PC-3 (cell line): ENCODE measurements at regions of chr6 and their contacts with region 1.

Region 1: GRCh38 chr6:56542364-56543331 is 100.0 kb downstream of the DST start:
- DNase-seq: peak; percentile 98
- ATAC-seq: peak; percentile 86
- H3K4me3 ChIP-seq: peak overlapping the region; percentile 77
- H3K27ac ChIP-seq: peak overlapping the region; percentile 91
- H3K4me1 ChIP-seq: peaks cover 49% of the 10 kb centered on the region
- H3K27me3 ChIP-seq: no peaks in the 10 kb centered on the region
- CTCF ChIP-seq: peak; percentile 43

Region 2: GRCh38 chr6:56359201-56359899 is 183.3 kb before region 1 on chr6:
- CTCF ChIA-PET with region 1: no interaction called
- POLR2A ChIA-PET with region 1: interaction called, 3 read pairs
- intact Hi-C with region 1: loop called (anchors 2 kb)
- DNase-seq: peak; percentile 84
- ATAC-seq: peak; percentile 68
- H3K4me3 ChIP-seq: no peak overlapping the region
- H3K27ac ChIP-seq: no peak overlapping the region
- H3K4me1 ChIP-seq: peaks cover 32% of the 10 kb centered on the region
- H3K27me3 ChIP-seq: no peaks in the 10 kb centered on the region
- CTCF ChIP-seq: peak; percentile 89

Region 3: GRCh38 chr6:56370561-56371211 is 172.0 kb before region 1 on chr6:
- CTCF ChIA-PET with region 1: interaction called, 21 read pairs
- POLR2A ChIA-PET with region 1: no interaction called
- intact Hi-C with region 1: no loop called
- DNase-seq: peak; percentile 89
- ATAC-seq: peak; percentile 75
- H3K4me3 ChIP-seq: peak overlapping the region; percentile 56
- H3K27ac ChIP-seq: peak overlapping the region; percentile 92
- H3K4me1 ChIP-seq: peaks cover 36% of the 10 kb centered on the region
- H3K27me3 ChIP-seq: no peaks in the 10 kb centered on the region
- CTCF ChIP-seq: no peak

Region 4: GRCh38 chr6:56416247-56416646 is 126.4 kb before region 1 on chr6:
- CTCF ChIA-PET with region 1: no interaction called
- POLR2A ChIA-PET with region 1: interaction called, 11 read pairs
- intact Hi-C with region 1: no loop called
- DNase-seq: no peak
- ATAC-seq: no peak
- H3K4me3 ChIP-seq: no peak overlapping the region
- H3K27ac ChIP-seq: no peak overlapping the region
- H3K4me1 ChIP-seq: no peaks in the 10 kb centered on the region
- H3K27me3 ChIP-seq: no peaks in the 10 kb centered on the region
- CTCF ChIP-seq: no peak

Region 5: DNA sequence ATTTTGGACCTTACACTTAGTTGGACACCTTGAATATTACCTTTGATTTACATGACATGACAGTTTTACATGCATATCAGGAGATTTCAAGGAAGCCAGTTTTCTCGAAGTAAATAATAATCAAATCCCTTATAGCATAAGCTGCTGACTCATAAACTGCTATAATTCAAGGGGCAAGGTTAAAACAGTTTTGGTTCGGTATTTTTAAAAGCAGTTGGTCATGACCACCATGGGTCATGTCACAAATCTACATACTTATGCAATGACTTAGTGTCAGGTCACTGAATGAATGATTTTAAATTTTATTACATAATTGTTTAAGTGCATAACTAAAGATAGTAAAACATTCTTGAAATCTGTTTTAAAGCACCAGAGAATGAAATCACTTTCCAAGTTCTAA is 58.0 kb before region 1 on chr6:
- CTCF ChIA-PET with region 1: no interaction called
- POLR2A ChIA-PET with region 1: no interaction called
- intact Hi-C with region 1: loop called (anchors 1 kb)
- DNase-seq: peak; percentile 90
- ATAC-seq: peak; percentile 83
- H3K4me3 ChIP-seq: peak overlapping the region; percentile 33
- H3K27ac ChIP-seq: peak overlapping the region; percentile 92
- H3K4me1 ChIP-seq: peaks cover 28% of the 10 kb centered on the region
- H3K27me3 ChIP-seq: no peaks in the 10 kb centered on the region
- CTCF ChIP-seq: no peak

Region 6: DNA sequence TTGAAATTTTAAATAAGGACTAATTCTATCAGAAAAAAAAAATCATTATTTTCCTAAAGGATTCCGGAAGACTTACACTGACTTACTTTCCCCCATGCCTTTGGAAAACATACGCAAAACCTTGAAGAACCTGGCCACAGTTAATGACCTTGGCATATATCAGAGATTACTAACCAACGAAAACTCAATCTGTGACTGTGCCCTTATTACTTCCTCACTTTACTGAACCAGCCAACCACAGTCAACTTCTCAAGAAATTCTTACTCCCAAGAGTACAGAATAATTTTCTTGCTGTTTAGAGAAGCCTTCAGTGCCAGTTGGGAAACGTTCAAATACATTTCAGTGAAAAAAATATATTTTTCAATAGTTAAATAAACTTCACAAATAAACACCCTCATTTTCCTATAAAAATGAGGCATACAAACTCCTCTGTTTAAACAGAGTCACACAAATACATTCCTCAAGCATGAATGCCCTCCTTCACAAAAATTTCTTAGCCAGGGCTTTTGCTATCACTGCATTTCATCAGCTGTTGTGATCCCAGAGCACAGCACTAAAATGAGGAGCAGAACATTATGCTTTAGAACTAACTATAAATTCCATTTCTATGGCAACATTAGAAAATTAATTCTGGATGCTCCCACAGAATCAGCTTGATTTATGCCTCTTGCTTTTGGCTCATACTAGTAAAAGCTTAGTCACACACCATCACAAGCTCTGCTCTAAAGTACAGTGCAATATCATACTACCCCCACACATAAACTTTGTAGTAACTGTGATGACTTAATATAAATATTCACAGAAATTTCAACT is 17.6 kb before region 1 on chr6:
- CTCF ChIA-PET with region 1: interaction called, 6 read pairs
- POLR2A ChIA-PET with region 1: interaction called, 7 read pairs
- intact Hi-C with region 1: loop called (anchors 1 kb)
- DNase-seq: peak; percentile 84
- ATAC-seq: peak; percentile 81
- H3K4me3 ChIP-seq: peak overlapping the region; percentile 15; the same call in 1 of the 2 replicates
- H3K27ac ChIP-seq: peak overlapping the region; percentile 85
- H3K4me1 ChIP-seq: peaks cover 72% of the 10 kb centered on the region
- H3K27me3 ChIP-seq: no peaks in the 10 kb centered on the region
- CTCF ChIP-seq: no peak

Region 7: GRCh38 chr6:56555438-56555872 is 12.8 kb after region 1 on chr6:
- CTCF ChIA-PET with region 1: interaction called, 5 read pairs
- POLR2A ChIA-PET with region 1: interaction called, 14 read pairs
- intact Hi-C with region 1: no loop called
- DNase-seq: no peak
- ATAC-seq: no peak
- H3K4me3 ChIP-seq: no peak overlapping the region
- H3K27ac ChIP-seq: no peak overlapping the region
- H3K4me1 ChIP-seq: peaks cover 16% of the 10 kb centered on the region
- H3K27me3 ChIP-seq: no peaks in the 10 kb centered on the region
- CTCF ChIP-seq: no peak

Region 8: GRCh38 chr6:56671651-56672461 is 129.2 kb after region 1 on chr6:
- CTCF ChIA-PET with region 1: no interaction called
- POLR2A ChIA-PET with region 1: no interaction called
- intact Hi-C with region 1: no loop called
- DNase-seq: no peak
- ATAC-seq: no peak
- H3K4me3 ChIP-seq: no peak overlapping the region
- H3K27ac ChIP-seq: no peak overlapping the region
- H3K4me1 ChIP-seq: peaks cover 21% of the 10 kb centered on the region
- H3K27me3 ChIP-seq: no peaks in the 10 kb centered on the region
- CTCF ChIP-seq: no peak

Region 9: GRCh38 chr6:56899311-56899710 is 356.7 kb after region 1 on chr6:
- CTCF ChIA-PET with region 1: no interaction called
- POLR2A ChIA-PET with region 1: no interaction called
- intact Hi-C with region 1: no loop called
- DNase-seq: peak; percentile 47
- ATAC-seq: peak; percentile 80
- H3K4me3 ChIP-seq: no peak overlapping the region
- H3K27ac ChIP-seq: no peak overlapping the region
- H3K4me1 ChIP-seq: peaks cover 18% of the 10 kb centered on the region
- H3K27me3 ChIP-seq: no peaks in the 10 kb centered on the region
- CTCF ChIP-seq: no peak